ENCODE measurements at regions of chr21 and their contacts with region 1.

Region 1: DNA sequence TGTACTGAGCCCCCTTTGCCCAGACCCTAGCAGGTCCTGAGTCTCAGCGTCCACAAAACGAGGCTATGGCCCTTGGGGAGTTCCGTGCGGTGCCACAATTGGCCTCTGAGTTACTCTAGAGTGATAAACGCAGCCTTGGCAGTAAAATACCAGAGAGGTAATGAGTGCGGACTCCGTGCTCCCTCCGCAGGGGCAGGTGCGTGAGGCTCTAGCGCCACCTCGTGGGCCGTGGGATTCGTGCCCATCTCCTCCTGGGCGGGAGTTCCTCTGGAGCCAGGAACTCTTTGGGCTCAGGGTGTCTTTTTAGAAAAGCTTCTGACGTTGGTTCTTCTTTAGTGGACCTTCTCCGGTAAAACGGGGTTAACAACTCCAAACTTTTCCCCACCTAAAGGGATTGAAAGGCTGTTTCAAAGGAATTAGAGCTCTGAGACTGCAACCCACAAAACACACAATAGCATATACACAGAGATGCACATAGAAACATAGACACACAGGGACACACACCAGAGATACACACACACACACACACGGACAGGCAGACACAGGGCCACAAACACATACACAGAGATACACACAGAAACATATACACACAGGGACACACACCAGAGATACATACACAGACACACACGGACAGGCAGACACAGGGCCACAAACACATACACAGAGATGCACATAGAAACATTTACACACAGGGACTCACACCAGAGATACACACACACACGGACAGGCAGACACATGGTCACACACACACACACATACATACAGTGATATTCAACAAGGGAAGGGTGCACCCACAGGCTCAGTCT is 99.4 kb downstream of the KCNJ15 start:
- DNase-seq: peak; percentile 57
- H3K4me3 Mint-ChIP-seq: no peak overlapping the region
- H3K27ac Mint-ChIP-seq: no peak overlapping the region
- H3K4me1 Mint-ChIP-seq: peaks cover 9% of the 10 kb centered on the region
- H3K27me3 Mint-ChIP-seq: peaks cover 8% of the 10 kb centered on the region

Region 2: GRCh38 chr21:37711836-37712568 is 644.2 kb before region 1 on chr21:
- intact Hi-C with region 1: loop called (anchors 10 kb)
- DNase-seq: peak; percentile 21
- H3K4me3 Mint-ChIP-seq: no peak overlapping the region
- H3K27ac Mint-ChIP-seq: no peak overlapping the region
- H3K4me1 Mint-ChIP-seq: no peaks in the 10 kb centered on the region
- H3K27me3 Mint-ChIP-seq: peaks cover 10% of the 10 kb centered on the region

Region 3: DNA sequence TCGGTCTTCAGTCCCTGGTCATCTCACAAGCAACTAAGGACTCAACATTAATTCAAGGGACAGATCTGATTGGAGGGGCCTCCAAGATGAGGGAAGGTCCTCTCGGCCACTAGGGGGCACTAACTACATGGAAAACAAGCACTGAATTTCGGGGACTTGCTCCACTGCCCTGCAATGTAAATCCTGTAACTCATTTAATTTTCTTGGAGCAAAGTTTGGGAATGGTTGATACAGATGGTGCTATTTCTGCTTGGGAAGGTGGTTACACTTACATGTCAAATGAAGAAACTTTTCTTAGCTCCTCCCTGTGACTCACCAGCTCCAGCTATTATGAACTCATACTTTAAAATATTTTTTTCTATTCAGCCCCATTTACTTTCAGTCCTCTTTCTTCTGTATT is 196.8 kb before region 1 on chr21:
- intact Hi-C with region 1: loop called (anchors 1 kb)
- DNase-seq: peak; percentile 14
- H3K4me3 Mint-ChIP-seq: no peak overlapping the region
- H3K27ac Mint-ChIP-seq: no peak overlapping the region
- H3K4me1 Mint-ChIP-seq: no peaks in the 10 kb centered on the region
- H3K27me3 Mint-ChIP-seq: peaks cover 19% of the 10 kb centered on the region

Region 4: DNA sequence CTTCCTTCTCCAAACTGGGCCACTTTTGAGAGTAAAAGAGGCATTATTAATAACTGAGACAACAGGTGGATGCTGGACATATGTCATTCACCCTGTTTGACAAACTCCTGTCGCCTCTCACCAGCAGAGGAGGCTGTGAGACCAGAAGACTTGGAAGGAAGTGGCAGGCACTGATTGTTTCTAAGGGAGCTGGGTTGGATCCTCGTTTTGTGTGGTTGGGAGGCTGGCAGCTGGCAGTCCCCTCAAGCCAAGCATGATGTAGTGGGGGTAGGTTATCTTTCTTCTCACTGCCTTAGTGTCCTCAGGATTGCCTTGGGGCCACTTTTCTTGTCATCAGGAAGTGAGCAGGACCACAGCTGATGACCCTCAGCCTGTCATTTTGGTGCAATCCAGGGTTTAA is 185.9 kb before region 1 on chr21:
- intact Hi-C with region 1: loop called (anchors 5 kb)
- DNase-seq: no peak
- H3K4me3 Mint-ChIP-seq: no peak overlapping the region
- H3K27ac Mint-ChIP-seq: no peak overlapping the region
- H3K4me1 Mint-ChIP-seq: no peaks in the 10 kb centered on the region
- H3K27me3 Mint-ChIP-seq: no peaks in the 10 kb centered on the region

Region 5: DNA sequence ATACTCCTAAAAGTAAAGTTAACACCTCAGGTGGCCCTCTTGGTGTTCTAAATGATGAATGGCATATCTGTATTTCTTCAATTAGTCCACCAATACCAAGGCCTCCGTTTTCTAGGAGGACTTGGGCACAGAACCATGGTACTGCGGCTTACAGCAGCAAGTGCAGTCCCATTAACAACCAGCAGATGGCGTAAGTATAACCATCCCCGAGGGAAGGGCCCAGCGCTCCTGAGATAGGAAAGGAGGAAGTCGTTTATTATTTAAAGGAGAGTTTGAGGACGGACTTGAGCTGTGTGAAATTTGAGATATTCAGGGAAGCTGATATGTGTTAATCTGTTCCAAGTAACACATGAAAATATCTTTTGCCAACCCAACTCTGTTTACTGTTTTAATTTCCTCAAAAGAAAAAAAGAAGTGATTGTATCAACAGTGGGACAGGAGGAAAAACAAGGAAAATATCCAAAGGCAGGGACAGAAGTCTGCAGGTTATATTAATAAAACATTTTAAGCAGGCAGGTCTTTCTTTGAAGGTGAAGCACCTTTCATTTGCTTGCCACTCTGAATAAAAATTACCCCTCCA is 137.1 kb before region 1 on chr21:
- intact Hi-C with region 1: loop called (anchors 1 kb)
- DNase-seq: peak; percentile 35
- H3K4me3 Mint-ChIP-seq: no peak overlapping the region
- H3K27ac Mint-ChIP-seq: no peak overlapping the region
- H3K4me1 Mint-ChIP-seq: peaks cover 6% of the 10 kb centered on the region
- H3K27me3 Mint-ChIP-seq: peaks cover 6% of the 10 kb centered on the region